Activated CD4-positive, alpha-beta T cell treated with anti-CD3 and anti-CD28 coated beads for 36 hours (primary cell): ENCODE measurements at regions of chr7 and their contacts with region 1.

Region 1: GRCh38 chr7:128381161-128381821 is 19.8 kb upstream of the PRRT4 start:
- DNase-seq: peak; percentile 75
- ATAC-seq: peak; percentile 66
- H3K4me3 Mint-ChIP-seq: no peak overlapping the region
- H3K27ac Mint-ChIP-seq: no peak overlapping the region
- H3K4me1 Mint-ChIP-seq: no peaks in the 10 kb centered on the region
- H3K27me3 Mint-ChIP-seq: no peaks in the 10 kb centered on the region

Region 2: GRCh38 chr7:128259131-128259800 is 122.0 kb before region 1 on chr7:
- CTCF ChIA-PET with region 1: no interaction called
- POLR2A ChIA-PET with region 1: no interaction called
- intact Hi-C with region 1: no loop called
- DNase-seq: no peak
- ATAC-seq: no peak
- H3K4me3 Mint-ChIP-seq: no peak overlapping the region
- H3K27ac Mint-ChIP-seq: no peak overlapping the region
- H3K4me1 Mint-ChIP-seq: no peaks in the 10 kb centered on the region
- H3K27me3 Mint-ChIP-seq: no peaks in the 10 kb centered on the region

Region 3: DNA sequence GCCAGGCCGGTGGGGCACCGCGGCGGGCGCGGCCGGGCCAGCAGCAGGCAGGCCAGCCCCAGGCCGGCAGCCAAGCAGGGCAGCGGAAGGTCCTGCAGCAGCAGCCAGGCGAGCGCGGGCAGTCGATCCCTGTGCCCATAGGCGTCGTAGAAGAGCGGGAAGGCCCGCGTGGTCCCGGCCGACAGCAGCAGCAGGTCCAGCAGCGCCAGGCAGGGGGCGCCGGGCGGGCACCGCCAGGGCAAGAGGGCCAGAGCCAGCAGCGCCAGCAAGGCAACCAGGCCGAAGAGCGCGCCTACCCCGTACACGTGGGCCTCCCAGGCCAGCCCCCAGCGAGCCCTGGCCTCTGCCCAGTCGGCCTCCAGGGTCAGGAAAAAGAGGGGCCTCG is 29.1 kb before region 1 on chr7:
- CTCF ChIA-PET with region 1: interaction called, 321 read pairs
- POLR2A ChIA-PET with region 1: no interaction called
- intact Hi-C with region 1: no loop called
- DNase-seq: peak; percentile 66
- ATAC-seq: peak; percentile 44
- H3K4me3 Mint-ChIP-seq: no peak overlapping the region
- H3K27ac Mint-ChIP-seq: no peak overlapping the region
- H3K4me1 Mint-ChIP-seq: no peaks in the 10 kb centered on the region
- H3K27me3 Mint-ChIP-seq: peaks cover 29% of the 10 kb centered on the region

Region 4: DNA sequence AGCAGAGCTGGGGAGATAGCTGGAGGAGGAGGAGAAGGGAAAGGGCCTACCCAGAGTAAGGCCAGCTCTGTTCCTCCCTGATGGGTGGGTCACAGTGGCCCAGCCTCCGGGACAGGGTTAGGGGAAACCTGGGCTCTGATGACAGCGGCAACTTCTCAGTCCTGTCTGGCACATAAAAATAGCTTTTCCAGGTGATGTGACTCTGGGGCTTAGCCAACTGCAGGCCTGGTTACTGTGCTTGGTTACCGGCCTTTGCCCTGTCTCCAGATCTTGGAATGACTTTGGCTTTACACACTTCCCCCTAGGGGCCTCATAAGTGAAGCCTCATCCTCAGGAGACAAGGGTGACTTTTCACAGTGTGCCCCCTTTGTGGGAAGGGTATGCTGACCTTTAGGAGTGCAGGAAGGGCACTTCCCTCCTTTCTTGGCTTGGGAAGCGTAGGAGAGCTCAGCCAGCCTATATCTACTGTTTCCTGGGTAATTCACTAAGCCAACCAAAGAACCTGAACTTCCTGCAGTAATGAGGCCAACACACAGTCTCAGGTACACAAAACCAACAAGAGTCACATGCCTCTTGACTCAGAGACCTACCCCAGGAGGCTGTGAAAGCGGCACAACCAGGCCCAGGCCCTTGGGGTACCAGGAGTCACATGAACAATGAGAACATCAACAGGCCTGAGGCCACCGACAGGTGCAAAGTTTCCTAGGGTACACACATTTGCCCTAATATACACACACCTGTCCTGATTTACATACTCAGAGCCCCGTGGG is 62.7 kb after region 1 on chr7:
- CTCF ChIA-PET with region 1: no interaction called
- POLR2A ChIA-PET with region 1: no interaction called
- intact Hi-C with region 1: no loop called
- DNase-seq: no peak
- ATAC-seq: peak; percentile 59
- H3K4me3 Mint-ChIP-seq: no peak overlapping the region
- H3K27ac Mint-ChIP-seq: no peak overlapping the region
- H3K4me1 Mint-ChIP-seq: peaks cover 19% of the 10 kb centered on the region
- H3K27me3 Mint-ChIP-seq: no peaks in the 10 kb centered on the region

Region 5: DNA sequence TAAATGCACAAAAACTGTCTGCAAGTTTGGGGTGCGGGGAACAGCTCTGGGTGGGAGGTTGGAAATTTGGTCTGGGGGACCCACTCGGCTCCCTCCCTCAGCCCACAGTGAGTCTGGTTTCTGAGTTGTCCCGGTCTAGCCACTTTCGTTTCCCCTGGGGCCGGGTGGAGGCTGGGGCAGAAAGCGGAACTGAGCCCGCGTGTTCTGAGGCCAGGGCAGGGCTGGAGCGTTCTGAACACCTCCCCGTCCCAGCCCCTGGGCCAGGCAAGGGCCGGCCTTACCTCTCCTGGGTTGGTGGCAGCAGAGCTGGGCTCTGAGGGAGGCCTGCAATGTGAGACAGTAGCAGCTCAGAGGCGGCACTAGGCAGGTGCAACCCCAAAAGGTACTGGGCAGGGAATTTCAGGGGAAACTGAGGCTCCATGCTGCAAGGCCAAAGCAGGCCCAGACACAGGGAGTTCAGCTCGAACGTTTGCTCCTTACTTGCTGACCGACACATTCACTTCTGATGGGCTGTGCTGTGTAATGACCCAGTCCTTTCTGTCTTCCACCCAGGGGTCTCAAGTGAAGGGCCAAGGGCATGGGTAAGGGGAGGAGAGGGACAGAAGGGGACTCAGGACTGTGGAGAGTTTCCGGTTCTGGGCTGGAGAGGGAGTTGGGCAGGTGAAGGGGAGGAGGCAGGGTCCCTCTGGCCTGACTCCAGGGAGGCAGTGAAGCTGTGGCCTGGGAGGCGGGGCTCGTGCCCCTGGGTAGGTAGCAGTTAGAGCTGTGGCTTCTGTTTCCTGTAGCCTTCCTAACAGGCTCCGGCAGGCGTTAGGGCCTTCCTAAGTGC is 559.4 kb after region 1 on chr7:
- CTCF ChIA-PET with region 1: no interaction called
- POLR2A ChIA-PET with region 1: no interaction called
- intact Hi-C with region 1: no loop called
- DNase-seq: peak; percentile 33
- ATAC-seq: peak; percentile 20
- H3K4me3 Mint-ChIP-seq: peak overlapping the region; percentile 87
- H3K27ac Mint-ChIP-seq: peak overlapping the region; percentile 28
- H3K4me1 Mint-ChIP-seq: peaks cover 34% of the 10 kb centered on the region
- H3K27me3 Mint-ChIP-seq: peaks cover 20% of the 10 kb centered on the region